Uterus (tissue), 4 donors: ENCODE measurements at regions of chr3 and their contacts with region 1.

Region 1: DNA sequence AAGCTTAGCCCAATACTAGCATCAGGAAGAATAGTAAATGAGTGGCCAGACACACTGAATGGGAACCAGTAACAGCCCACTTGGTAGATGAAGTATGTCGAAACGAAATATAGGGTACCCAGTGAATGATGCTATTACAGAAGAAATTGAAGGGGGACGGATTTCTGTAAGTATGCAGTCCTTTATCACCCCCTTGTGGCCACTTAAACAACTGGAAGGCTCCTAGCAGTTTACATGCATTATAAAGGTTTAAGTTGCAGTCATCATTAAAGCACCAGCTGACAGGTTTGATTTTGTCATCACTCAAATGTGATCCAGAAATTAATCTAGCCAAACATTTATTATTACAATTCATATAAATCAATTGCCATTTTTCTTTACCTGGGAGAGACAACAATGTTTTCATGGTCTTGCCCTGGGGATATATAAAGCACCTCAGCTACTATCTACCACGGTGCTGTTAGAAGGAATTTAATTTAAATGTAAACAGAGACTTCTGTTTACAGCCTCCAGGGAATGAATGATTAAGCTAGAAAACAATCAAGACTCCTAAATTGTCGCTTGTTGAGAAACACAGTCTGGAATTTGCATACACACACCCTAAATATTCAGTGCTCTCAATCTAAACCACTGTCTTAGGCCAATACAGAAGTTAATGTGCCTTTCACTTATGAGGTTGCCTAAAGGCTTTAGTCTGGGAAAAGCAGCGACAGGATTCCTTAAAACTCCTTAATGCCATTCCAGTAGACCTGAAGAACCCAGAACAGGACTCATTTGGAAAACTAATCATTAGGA is 7.8 kb downstream of the EIF1B start:
- DNase-seq: peak in 1 of 2 donors; percentile 38
- H3K4me3 ChIP-seq: no peak overlapping the region
- H3K27ac ChIP-seq: no peak overlapping the region
- H3K4me1 ChIP-seq: no peaks in the 10 kb centered on the region
- H3K27me3 ChIP-seq: no peaks in the 10 kb centered on the region
- CTCF ChIP-seq: peak; percentile 62 to 73 (median 72)
- POLR2A ChIP-seq: no peak

Region 2: GRCh38 chr3:40452876-40453730 is 135.8 kb after region 1 on chr3:
- intact Hi-C with region 1: loop called (anchors 10 kb)
- DNase-seq: peak; percentile 97 to 98
- H3K4me3 ChIP-seq: peak overlapping the region; percentile 67 to 90
- H3K27ac ChIP-seq: peak overlapping the region; percentile 90 to 94
- H3K4me1 ChIP-seq: peaks cover 5% of the 10 kb centered on the region in 2 donors
- H3K27me3 ChIP-seq: no peaks in the 10 kb centered on the region
- CTCF ChIP-seq: peak in 1 of 4 experiments; percentile 8
- POLR2A ChIP-seq: peak; percentile 31 to 39